SK-N-SH (cell line): ENCODE measurements at regions of chr10 and their contacts with region 1.

Region 1: DNA sequence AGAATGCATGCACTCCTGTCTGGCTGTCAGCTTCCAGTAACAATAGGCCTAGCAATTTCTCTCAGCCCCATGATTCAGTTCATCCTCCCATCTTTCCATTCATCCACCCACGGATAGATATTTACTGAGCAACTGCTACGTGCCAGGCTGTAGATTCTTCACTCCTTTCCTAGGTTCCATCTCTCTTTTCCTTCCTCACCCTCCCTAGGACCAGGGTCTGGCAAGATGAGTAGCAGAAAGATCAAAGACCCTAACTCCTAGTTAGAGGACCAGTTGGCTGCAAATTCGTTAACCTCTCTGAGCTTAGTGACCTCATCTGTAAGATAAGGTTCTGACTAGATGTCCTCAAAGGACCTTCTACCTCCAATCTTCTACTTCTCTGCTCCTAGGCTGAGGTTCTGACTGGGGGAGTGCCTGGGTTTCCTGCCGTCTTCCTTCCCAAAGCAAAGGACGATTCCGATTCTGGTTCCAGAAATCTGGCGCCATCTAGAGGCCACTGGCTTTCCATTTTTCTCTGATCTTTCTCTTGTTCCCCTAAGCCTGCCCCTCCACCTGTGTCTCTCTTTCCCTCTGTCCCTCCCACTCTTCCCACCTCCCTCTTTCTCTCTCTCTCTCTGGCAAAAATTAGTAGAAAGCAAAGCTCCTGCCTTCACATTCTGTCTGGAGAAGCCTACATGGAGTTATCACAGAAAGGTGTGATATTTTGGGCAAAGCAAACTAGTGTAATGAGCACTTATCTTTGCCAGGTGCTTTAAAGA is 26.2 kb downstream of the TBATA start:
- DNase-seq: peak; percentile 81
- H3K4me3 ChIP-seq: no peak overlapping the region
- H3K27ac ChIP-seq: peak overlapping the region in 1 of 2 experiments; percentile 25; a peak in 1 of 4 replicates
- H3K4me1 ChIP-seq: peaks cover 0 to 17% of the 10 kb centered on the region in 2 experiments; a peak in 1 of 4 replicates
- H3K27me3 ChIP-seq: no peaks in the 10 kb centered on the region
- CTCF ChIP-seq: peak; percentile 69
- EP300 ChIP-seq: no peak
- RAD21 ChIP-seq: peak; percentile 91

Region 2: DNA sequence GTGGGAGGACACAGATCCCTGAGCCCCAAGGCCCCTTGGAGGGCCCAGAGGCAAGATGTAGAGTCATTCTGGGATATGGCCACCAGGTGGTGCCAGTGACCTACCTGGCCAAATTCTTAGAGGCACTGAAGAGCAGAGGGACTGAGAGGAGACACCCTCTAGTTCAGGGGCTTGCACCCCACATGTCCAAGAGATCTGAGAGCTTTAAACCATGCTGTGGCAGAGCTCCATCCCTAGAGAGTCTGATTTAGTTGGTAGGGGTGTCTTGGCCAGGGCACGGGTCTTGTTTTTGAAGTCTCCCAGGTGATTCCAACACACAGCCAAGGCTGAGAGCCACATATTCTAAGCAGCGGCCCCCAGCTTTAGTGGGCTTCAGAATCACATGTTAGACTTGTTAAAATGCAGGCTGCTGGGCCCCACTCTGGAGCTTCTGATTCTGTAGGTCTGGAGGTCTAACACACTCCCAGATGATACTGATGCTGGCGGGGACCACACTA is 208.9 kb before region 1 on chr10:
- CTCF ChIA-PET with region 1: interaction called, 118 read pairs
- POLR2A ChIA-PET with region 1: no interaction called
- DNase-seq: peak; percentile 88
- H3K4me3 ChIP-seq: no peak overlapping the region; a peak in 1 of 4 replicates
- H3K27ac ChIP-seq: no peak overlapping the region
- H3K4me1 ChIP-seq: peaks cover 3 to 5% of the 10 kb centered on the region in 2 experiments; a peak in 2 of 4 replicates
- H3K27me3 ChIP-seq: no peaks in the 10 kb centered on the region
- CTCF ChIP-seq: peak; percentile 88
- EP300 ChIP-seq: no peak
- RAD21 ChIP-seq: peak; percentile 98

Region 3: DNA sequence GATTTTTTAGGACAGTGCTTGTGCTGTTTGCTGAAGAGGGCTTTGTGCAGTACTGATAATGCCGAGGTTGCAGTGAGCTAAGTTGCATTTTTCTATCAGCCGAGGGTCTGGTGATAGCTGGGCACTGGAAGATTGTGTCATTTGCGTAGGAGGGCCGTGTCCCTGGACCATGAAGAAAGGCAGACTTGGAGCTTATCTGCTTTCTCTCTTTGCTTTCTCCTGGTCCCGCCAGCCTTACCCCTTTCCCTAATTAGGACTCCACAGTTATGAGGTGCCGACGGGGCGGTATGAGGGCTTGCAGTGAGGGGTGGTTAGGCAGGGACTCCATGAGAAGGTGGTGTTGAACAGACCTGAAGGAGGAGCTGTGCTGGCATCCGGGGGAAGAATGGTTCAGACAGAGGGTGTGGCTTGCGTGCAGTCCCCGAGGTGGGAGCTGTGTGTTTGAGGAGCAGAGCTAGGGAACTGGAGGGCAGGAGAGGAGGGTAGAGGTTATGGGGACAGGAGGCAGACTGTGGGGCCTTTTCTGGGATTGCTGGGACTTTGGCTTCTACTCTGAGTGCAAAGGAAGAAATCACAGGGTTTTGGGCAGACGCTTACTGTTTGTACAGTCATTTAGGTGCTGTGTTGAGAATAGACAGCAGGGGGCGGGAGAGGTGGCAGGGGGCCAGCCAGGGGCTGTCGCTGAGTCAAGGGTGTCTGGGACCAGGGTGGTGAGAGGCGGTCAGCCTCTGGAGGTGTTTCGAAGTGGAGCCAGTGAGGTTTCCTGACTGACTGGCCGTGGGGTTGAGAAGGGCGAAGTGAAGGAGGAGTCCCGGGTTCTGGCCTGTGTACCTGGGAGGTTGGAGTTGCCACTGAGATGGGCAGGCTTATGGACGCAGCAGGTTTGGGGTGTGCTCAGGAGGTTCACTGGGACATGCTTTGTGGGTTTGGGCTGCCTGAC is 199.8 kb before region 1 on chr10:
- CTCF ChIA-PET with region 1: interaction called, 118 read pairs
- POLR2A ChIA-PET with region 1: no interaction called
- DNase-seq: peak; percentile 75
- H3K4me3 ChIP-seq: no peak overlapping the region
- H3K27ac ChIP-seq: no peak overlapping the region; a peak in 1 of 4 replicates
- H3K4me1 ChIP-seq: peaks cover 0 to 52% of the 10 kb centered on the region in 2 experiments; a peak in 1 of 4 replicates
- H3K27me3 ChIP-seq: no peaks in the 10 kb centered on the region
- CTCF ChIP-seq: peak; percentile 56
- EP300 ChIP-seq: no peak
- RAD21 ChIP-seq: peak; percentile 48

Region 4: GRCh38 chr10:70705121-70705861 is 53.6 kb before region 1 on chr10:
- CTCF ChIA-PET with region 1: interaction called, 10 read pairs
- POLR2A ChIA-PET with region 1: no interaction called
- DNase-seq: peak; percentile 61
- H3K4me3 ChIP-seq: no peak overlapping the region
- H3K27ac ChIP-seq: no peak overlapping the region
- H3K4me1 ChIP-seq: peaks cover 0 to 13% of the 10 kb centered on the region in 2 experiments; a peak in 1 of 4 replicates
- H3K27me3 ChIP-seq: no peaks in the 10 kb centered on the region
- CTCF ChIP-seq: no peak
- EP300 ChIP-seq: no peak
- RAD21 ChIP-seq: peak; percentile 45

Region 5: DNA sequence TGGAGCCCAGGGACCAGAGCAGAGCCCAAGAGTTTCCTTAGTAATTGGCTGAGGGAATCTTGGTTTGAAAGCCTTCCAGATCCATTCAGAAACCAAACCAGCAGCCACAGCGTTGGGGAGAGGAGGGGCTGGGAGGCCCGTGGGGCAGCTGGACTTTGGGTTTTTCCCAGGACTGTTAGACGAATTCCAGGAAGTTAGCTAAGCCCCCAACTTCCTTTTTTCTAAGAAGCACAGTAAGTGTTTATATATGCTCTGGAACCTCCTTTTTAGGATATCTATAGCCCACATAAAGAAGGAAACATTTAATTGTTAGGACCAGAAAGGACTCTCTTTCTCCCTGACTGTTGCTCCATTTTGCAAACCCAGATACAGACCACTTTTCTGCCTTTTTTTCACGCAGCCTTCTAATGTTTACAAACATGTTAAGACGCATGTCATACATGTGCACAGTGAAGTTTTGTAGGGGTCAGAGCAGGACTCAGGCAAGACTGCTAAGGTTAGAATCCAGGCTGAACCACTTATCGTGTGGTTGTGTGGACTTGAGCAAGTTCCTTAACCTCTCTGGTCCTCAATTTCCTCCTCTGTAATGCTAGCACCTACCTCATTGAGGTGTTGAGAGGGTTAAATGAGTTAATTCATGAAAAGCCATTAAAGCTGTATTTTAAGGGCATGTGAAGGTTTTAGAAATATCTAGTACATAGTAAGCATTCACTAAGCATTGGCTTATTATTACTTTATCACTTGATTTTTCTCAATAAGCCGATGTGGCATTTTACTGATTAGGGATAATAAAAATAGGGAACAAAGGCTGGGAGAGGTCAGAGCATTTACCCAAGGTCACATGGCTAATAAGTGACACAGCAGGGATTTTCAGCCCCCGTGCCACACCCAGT is 16.2 kb before region 1 on chr10:
- CTCF ChIA-PET with region 1: interaction called, 13 read pairs
- POLR2A ChIA-PET with region 1: no interaction called
- DNase-seq: no peak
- H3K4me3 ChIP-seq: no peak overlapping the region
- H3K27ac ChIP-seq: no peak overlapping the region
- H3K4me1 ChIP-seq: peaks cover 0 to 8% of the 10 kb centered on the region in 2 experiments; a peak in 1 of 4 replicates
- H3K27me3 ChIP-seq: no peaks in the 10 kb centered on the region
- CTCF ChIP-seq: no peak
- EP300 ChIP-seq: no peak
- RAD21 ChIP-seq: no peak

Region 6: GRCh38 chr10:70774810-70775678 is 16.1 kb after region 1 on chr10:
- CTCF ChIA-PET with region 1: interaction called, 11 read pairs
- POLR2A ChIA-PET with region 1: no interaction called
- DNase-seq: peak; percentile 12
- H3K4me3 ChIP-seq: no peak overlapping the region
- H3K27ac ChIP-seq: no peak overlapping the region
- H3K4me1 ChIP-seq: peaks cover 0 to 10% of the 10 kb centered on the region in 2 experiments; a peak in 1 of 4 replicates
- H3K27me3 ChIP-seq: no peaks in the 10 kb centered on the region; the same call in 1 of the 2 replicates
- CTCF ChIP-seq: no peak
- EP300 ChIP-seq: no peak
- RAD21 ChIP-seq: no peak

Region 7: GRCh38 chr10:70880077-70880534 is 121.2 kb after region 1 on chr10:
- CTCF ChIA-PET with region 1: interaction called, 10 read pairs
- POLR2A ChIA-PET with region 1: no interaction called
- DNase-seq: peak; percentile 80
- H3K4me3 ChIP-seq: no peak overlapping the region; a peak in 1 of 4 replicates
- H3K27ac ChIP-seq: peak overlapping the region in 1 of 2 experiments; percentile 58; a peak in 2 of 4 replicates
- H3K4me1 ChIP-seq: peaks cover 0 to 26% of the 10 kb centered on the region in 2 experiments; a peak in 2 of 4 replicates
- H3K27me3 ChIP-seq: no peaks in the 10 kb centered on the region
- CTCF ChIP-seq: peak; percentile 95
- EP300 ChIP-seq: no peak
- RAD21 ChIP-seq: peak; percentile 98